Dorsolateral prefrontal cortex (tissue), 120 donors: ENCODE measurements at regions of chr7 and their contacts with region 1.

Region 1: DNA sequence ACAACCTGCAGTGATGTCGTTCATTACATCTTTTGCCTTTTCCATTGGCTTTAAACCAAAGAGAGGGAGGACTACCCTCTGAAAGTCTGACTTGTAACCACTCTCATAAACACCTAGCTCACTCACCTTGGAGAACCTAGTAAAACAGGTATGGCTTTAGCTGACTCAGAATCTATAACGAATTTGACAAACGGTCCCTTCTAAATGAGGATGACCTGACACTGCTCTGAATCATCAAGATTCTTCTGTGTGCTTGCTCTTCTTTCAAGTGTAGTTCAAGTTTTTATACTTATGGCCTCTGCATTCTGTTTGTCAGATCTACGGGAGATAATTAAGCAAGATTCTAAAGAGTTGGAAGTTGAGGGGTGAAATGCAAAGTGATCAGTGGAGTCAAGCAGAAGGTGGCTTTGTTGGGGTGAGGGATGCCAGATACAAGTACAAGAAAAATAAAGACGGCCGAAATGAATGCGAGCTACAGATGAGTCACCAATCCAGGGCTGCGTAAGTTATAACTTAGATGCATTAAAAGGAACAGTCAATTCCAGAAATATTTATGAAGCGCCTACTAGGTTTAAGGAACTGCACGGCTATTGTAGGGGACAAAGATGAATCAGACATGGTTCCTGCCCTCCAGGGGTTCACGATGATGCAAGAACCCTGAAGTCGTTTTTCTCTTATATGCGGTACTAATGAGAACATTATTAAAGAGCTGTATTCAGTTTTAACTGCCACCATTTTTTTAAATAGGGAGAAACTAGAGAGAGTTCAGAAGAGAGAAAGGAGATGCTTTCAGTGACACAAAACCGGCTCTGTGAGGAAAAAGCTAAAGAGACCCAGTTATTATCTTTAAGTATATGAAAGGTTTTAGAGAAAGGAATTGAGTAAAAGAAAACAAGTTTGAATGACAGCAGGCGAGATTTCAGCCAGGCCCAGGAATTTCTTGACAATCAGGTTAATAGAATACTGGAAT is 6.5 kb downstream of the HIPK2 start:
- DNase-seq: no peak
- H3K4me3 ChIP-seq: peak overlapping the region in 7 of 59 donors; percentile 2 to 21 (median 7)
- H3K27ac ChIP-seq: peak overlapping the region in 55 of 59 donors; percentile 7 to 99 (median 58)
- H3K27me3 ChIP-seq: no peaks in the 10 kb centered on the region
- CTCF ChIP-seq: no peak

Region 2: DNA sequence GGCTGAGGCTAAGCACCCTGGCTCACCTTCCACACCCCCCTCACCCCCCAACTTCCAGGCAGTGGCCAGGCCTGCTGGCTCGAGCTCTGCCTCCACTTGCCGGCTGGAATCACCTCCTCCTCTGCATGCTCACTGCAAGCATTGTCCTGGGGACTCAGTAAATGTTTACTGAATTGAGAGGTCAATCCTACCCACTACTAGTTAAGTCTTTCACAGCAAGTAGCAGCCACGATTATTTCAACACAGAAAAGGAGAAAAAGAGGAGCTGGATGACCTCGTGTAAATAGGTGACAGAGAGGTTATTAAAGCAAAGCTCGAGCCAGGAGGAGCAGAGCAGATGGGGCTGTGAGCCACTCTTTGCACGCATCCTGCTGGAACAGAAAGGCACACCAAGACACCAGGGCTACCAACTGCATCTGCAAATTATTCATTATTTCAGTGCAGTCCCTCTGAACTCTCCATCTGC is 25.6 kb before region 1 on chr7:
- intact Hi-C with region 1: loop called (anchors 2 to 5 kb)
- DNase-seq: no peak
- H3K4me3 ChIP-seq: peak overlapping the region in 2 of 59 donors; percentile 11 to 16
- H3K27ac ChIP-seq: peak overlapping the region in 58 of 59 donors; percentile 7 to 99 (median 79)
- H3K27me3 ChIP-seq: no peaks in the 10 kb centered on the region
- CTCF ChIP-seq: no peak